B cell (primary cell): ENCODE measurements at regions of chr18 and their contacts with region 1.

Region 1: DNA sequence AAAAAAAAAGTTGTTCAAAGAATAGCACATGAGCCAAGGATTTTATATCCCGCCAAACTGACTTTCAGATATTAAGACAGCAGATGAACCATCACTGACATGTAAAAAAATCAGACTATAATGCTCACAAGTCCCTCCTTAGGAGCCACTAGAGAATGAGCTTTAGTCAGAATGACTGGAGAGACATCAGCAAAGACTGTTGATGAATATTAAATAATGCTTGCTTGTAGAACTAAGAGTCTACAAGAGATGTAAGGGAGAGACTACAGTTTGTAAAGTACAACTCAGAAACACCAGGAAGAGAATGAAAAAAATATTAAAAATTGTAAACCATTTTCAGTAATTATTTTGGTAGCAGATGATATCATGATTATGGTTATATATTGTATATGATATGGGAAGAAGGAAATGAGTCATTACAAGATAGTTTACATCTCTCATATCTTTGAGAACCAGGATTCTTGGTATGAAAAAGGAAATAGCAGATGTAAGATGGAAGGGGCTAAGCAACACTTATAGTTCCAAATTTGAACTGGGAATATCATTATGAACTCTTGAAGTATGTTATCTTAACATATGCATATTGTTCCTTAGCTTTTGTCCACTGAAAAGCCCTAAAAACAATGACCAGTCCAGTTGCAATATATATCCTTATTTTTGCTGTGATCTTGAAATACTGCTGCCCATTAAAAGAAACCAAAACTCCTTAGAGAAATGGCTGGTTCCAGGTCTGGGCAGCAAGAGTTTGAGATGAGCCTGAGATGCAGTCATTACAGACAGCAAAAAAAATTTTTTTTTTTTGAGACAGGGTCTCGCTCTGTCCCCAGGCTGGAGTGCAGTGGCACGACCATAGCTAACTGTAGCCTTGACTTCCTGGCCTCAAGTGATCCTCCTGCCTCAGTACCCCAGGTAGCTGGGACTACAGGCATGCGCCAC is 55.7 kb downstream of the PTPN2 start:
- DNase-seq: no peak
- ATAC-seq: no peak
- H3K4me3 ChIP-seq: no peak overlapping the region
- H3K4me3 Mint-ChIP-seq: no peak overlapping the region
- H3K27ac ChIP-seq: no peak overlapping the region
- H3K27ac Mint-ChIP-seq: no peak overlapping the region
- H3K4me1 ChIP-seq: no peaks in the 10 kb centered on the region
- H3K4me1 Mint-ChIP-seq: no peaks in the 10 kb centered on the region
- H3K27me3 ChIP-seq: no peaks in the 10 kb centered on the region
- H3K27me3 Mint-ChIP-seq: no peaks in the 10 kb centered on the region
- CTCF ChIP-seq: no peak

Region 2: GRCh38 chr18:12478269-12479047 is 349.9 kb before region 1 on chr18:
- CTCF ChIA-PET with region 1: no interaction called
- POLR2A ChIA-PET with region 1: no interaction called
- intact Hi-C with region 1: no loop called
- DNase-seq: no peak
- ATAC-seq: no peak
- H3K4me3 ChIP-seq: no peak overlapping the region
- H3K4me3 Mint-ChIP-seq: no peak overlapping the region
- H3K27ac ChIP-seq: no peak overlapping the region
- H3K27ac Mint-ChIP-seq: no peak overlapping the region
- H3K4me1 ChIP-seq: no peaks in the 10 kb centered on the region
- H3K4me1 Mint-ChIP-seq: no peaks in the 10 kb centered on the region
- H3K27me3 ChIP-seq: no peaks in the 10 kb centered on the region
- H3K27me3 Mint-ChIP-seq: no peaks in the 10 kb centered on the region
- CTCF ChIP-seq: no peak

Region 3: GRCh38 chr18:12843420-12844350 is 15.3 kb after region 1 on chr18:
- CTCF ChIA-PET with region 1: no interaction called
- POLR2A ChIA-PET with region 1: no interaction called
- intact Hi-C with region 1: no loop called
- DNase-seq: no peak
- ATAC-seq: no peak
- H3K4me3 ChIP-seq: no peak overlapping the region
- H3K4me3 Mint-ChIP-seq: no peak overlapping the region
- H3K27ac ChIP-seq: no peak overlapping the region
- H3K27ac Mint-ChIP-seq: no peak overlapping the region
- H3K4me1 ChIP-seq: peaks cover 24 to 26% of the 10 kb centered on the region in 2 donors
- H3K4me1 Mint-ChIP-seq: peaks cover 46% of the 10 kb centered on the region
- H3K27me3 ChIP-seq: no peaks in the 10 kb centered on the region
- H3K27me3 Mint-ChIP-seq: no peaks in the 10 kb centered on the region
- CTCF ChIP-seq: no peak

Region 4: DNA sequence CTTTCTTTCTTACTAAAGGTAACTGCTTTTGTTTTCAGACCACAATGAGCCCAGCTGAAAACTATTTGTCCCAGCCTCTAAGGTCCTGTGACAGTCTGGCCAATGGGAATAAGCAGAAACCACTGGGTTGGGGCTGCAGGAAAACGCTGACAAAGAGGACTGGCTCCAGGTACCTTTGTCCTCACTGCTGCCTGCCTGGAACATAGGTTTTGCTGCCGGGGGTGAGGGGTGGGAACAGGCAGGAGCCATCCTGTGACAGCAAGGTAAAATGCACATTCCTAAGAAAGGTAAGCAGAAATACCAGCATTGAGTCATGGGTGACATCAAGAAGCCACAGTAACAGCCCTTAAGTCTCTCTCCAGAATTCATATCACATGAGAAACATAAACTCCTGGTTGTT is 34.1 kb after region 1 on chr18:
- CTCF ChIA-PET with region 1: no interaction called
- POLR2A ChIA-PET with region 1: no interaction called
- intact Hi-C with region 1: loop called (anchors 5 kb)
- DNase-seq: no peak
- ATAC-seq: no peak
- H3K4me3 ChIP-seq: no peak overlapping the region
- H3K4me3 Mint-ChIP-seq: no peak overlapping the region
- H3K27ac ChIP-seq: no peak overlapping the region
- H3K27ac Mint-ChIP-seq: peak overlapping the region; percentile 62
- H3K4me1 ChIP-seq: peaks cover 34 to 36% of the 10 kb centered on the region in 2 donors
- H3K4me1 Mint-ChIP-seq: peaks cover 51% of the 10 kb centered on the region
- H3K27me3 ChIP-seq: no peaks in the 10 kb centered on the region
- H3K27me3 Mint-ChIP-seq: no peaks in the 10 kb centered on the region
- CTCF ChIP-seq: no peak

Region 5: GRCh38 chr18:13103366-13103765 is 275.0 kb after region 1 on chr18:
- CTCF ChIA-PET with region 1: no interaction called
- POLR2A ChIA-PET with region 1: no interaction called
- intact Hi-C with region 1: no loop called
- DNase-seq: no peak
- ATAC-seq: no peak
- H3K4me3 ChIP-seq: no peak overlapping the region
- H3K4me3 Mint-ChIP-seq: no peak overlapping the region
- H3K27ac ChIP-seq: no peak overlapping the region
- H3K27ac Mint-ChIP-seq: no peak overlapping the region
- H3K4me1 ChIP-seq: no peaks in the 10 kb centered on the region
- H3K4me1 Mint-ChIP-seq: no peaks in the 10 kb centered on the region
- H3K27me3 ChIP-seq: no peaks in the 10 kb centered on the region
- H3K27me3 Mint-ChIP-seq: no peaks in the 10 kb centered on the region
- CTCF ChIP-seq: peak; percentile 36

Region 6: DNA sequence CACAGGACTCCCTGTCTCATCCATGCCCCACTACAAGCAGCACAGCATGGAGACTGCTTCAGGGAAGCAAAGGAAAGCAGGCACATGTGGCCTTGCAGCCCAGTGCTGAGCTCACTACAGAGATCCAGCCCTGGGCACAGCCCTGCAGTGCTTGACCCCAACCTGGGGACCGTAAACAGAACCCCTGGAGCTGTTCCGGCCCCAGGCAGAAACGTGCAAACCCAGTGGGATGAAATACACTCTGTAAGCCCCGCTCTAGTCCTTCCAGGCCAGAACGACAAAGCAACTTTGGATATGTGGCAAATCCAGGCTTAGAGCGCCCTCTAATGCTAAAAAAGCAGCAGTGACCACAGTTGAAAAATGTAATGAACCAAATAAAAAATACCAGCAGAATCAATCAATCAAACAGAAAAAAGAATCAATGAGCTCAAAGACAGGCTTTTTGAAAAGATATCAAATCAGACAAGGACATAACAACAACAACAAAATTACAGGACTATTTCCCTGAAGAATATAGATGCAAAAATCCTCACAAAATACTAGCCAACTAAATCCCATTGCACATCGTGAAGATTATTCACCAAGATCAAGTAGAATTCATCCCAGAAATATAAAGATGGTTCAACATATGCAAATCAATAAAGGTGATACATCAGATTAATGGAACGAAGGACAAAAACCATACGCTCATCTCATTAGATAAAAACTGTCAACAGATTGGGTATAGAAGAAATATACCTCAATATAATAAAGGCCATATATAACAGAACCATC is 1258.3 kb after region 1 on chr18:
- CTCF ChIA-PET with region 1: no interaction called
- POLR2A ChIA-PET with region 1: no interaction called
- intact Hi-C with region 1: no loop called
- DNase-seq: peak; percentile 18
- ATAC-seq: no peak
- H3K4me3 ChIP-seq: no peak overlapping the region
- H3K4me3 Mint-ChIP-seq: no peak overlapping the region
- H3K27ac ChIP-seq: no peak overlapping the region
- H3K27ac Mint-ChIP-seq: no peak overlapping the region
- H3K4me1 ChIP-seq: no peaks in the 10 kb centered on the region
- H3K4me1 Mint-ChIP-seq: no peaks in the 10 kb centered on the region
- H3K27me3 ChIP-seq: no peaks in the 10 kb centered on the region
- H3K27me3 Mint-ChIP-seq: no peaks in the 10 kb centered on the region
- CTCF ChIP-seq: peak; percentile 63